ENCODE measurements at regions of chr11 and their contacts with region 1.

Region 1: GRCh38 chr11:9672288-9672916 is 8.5 kb downstream of the SWAP70 start:
- DNase-seq: no peak
- ATAC-seq: peak in 1 of 8 donors; percentile 53
- H3K4me3 ChIP-seq: no peak overlapping the region
- H3K27ac ChIP-seq: no peak overlapping the region
- H3K4me1 ChIP-seq: peaks cover 0 to 59% (median 15%) of the 10 kb centered on the region in 9 donors
- H3K27me3 ChIP-seq: no peaks in the 10 kb centered on the region
- CTCF ChIP-seq: no peak

Region 2: GRCh38 chr11:9688716-9689511 is 16.5 kb after region 1 on chr11:
- intact Hi-C with region 1: loop called in 1 of 10 experiments (anchors 1 kb)
- DNase-seq: peak in 1 of 2 donors; percentile 24
- ATAC-seq: peak; percentile 64 to 86 (median 79)
- H3K4me3 ChIP-seq: peak overlapping the region in 1 of 10 donors; percentile 15
- H3K27ac ChIP-seq: peak overlapping the region; percentile 51 to 91 (median 80)
- H3K4me1 ChIP-seq: peaks cover 0 to 71% (median 41%) of the 10 kb centered on the region in 9 donors
- H3K27me3 ChIP-seq: no peaks in the 10 kb centered on the region
- CTCF ChIP-seq: no peak